ENCODE measurements at regions of chr7 and their contacts with region 1.

Region 1: DNA sequence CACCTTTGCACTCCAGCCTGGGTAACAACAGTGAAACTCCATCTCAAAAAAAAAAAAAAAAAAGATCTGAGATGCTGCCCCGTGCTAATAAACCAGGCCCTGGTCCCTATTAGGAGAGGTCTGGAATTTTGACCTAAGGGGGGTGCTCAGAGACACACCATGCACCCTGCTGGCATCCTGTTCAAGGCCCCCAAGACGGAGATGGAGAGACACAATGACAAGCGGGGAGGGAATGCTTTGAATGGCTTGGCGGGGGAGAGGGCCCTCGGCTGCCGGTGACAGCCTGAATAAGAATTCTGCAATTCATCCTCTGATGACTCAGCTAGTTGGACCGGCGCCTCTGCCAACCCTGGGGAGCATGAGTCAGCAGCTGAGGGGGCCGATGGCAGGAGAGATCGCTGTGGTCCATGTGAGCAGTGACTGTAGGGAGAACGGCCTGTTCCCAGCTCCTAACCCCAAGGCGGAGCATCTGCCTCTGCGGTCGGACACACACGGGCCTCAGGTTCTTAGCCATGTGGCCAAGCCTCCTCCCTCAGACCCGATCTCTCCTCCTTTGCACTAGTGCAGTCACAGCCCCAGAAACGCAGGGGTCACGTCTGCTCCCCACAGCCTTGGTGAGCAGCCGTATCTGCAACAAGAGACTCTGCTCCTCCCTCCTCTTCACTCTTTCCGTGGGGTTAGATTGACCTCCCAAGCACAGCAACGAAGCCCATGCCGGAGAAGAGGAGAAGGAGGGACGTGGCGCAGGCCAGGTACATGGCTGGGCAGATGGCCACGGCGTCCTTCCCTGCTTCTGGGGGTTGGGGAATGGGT is 14.9 kb downstream of the TRIM56 start:
- DNase-seq: peak; percentile 97
- H3K4me3 ChIP-seq: no peak overlapping the region
- H3K27ac ChIP-seq: peak overlapping the region; percentile 89
- H3K4me1 ChIP-seq: peaks cover 43% of the 10 kb centered on the region
- H3K27me3 ChIP-seq: no peaks in the 10 kb centered on the region
- CTCF ChIP-seq: no peak
- POLR2A ChIP-seq: peak; percentile 89

Region 2: DNA sequence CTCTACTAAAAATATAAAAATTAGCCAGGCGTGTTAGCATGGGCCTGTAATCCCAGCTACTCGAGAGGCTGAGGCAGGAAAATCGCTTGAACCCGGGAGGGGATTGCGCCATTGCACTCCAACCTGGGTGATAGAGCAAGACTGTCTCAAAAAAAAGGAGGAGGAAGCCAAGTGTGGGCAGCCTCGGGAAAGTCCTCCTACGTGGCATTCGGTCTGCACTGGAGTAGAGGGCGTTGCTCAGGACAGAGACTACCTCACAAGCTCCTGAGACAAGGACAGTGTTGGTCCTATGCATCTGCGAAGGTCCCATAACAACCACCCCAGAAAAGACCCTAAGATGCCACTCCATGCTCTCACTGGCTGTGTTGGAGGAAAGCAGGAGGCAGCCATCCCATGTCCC is 16.7 kb after region 1 on chr7:
- CTCF ChIA-PET with region 1: interaction called, 24 read pairs
- POLR2A ChIA-PET with region 1: interaction called, 19 read pairs
- dilution Hi-C with region 1: no loop called
- intact Hi-C with region 1: loop called (anchors 1 kb)
- DNase-seq: no peak
- H3K4me3 ChIP-seq: no peak overlapping the region
- H3K27ac ChIP-seq: peak overlapping the region; percentile 95
- H3K4me1 ChIP-seq: peaks cover 52% of the 10 kb centered on the region
- H3K27me3 ChIP-seq: no peaks in the 10 kb centered on the region
- CTCF ChIP-seq: no peak
- POLR2A ChIP-seq: no peak

Region 3: DNA sequence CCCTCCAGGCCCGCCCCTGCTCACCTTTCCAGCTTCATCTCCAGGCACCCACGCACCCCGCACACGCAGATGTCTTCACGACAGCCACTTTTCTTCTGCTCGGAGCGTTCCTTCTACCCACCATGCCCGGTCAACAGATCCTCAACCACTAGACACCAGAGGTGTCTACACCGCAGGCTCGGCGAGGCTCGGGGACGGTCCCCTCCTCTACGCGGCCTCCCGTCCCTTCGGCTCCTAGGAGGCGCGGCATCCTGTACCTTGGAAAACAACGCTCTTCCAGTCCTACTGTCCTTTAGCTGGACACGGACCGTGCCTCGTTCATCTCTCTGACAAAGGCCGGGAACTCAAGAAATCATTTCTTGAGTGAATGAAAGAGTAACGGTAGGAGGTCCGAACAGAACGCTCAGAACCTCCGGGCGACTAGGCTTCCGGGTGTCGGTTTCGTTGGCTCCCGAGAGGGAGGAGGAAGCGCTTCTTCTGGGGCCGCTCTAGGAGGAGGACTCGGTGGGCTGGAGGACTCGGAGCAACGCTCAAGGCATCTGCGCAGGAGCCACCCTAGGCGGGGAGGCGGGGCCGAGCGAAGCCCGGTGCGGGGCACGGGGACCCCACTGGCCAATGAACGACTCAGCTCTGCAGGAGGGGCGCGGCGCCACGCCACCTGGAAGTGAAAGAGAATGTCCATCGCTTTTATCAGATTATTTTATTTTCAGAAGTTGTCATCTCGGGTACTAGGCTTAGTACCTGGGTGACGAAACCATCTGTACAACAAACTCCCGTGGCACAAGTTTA is 151.9 kb after region 1 on chr7:
- CTCF ChIA-PET with region 1: no interaction called
- POLR2A ChIA-PET with region 1: no interaction called
- dilution Hi-C with region 1: no loop called
- intact Hi-C with region 1: no loop called
- DNase-seq: peak; percentile 99
- H3K4me3 ChIP-seq: peak overlapping the region; percentile 67 to 98 (median 89)
- H3K27ac ChIP-seq: peak overlapping the region; percentile 52
- H3K4me1 ChIP-seq: peaks cover 4% of the 10 kb centered on the region
- H3K27me3 ChIP-seq: no peaks in the 10 kb centered on the region
- CTCF ChIP-seq: no peak
- POLR2A ChIP-seq: peak; percentile 76

Measured in endothelial cell of umbilical vein (primary cell).